HCT116 (cell line): ENCODE measurements at regions of chr2 and their contacts with region 1.

Region 1: DNA sequence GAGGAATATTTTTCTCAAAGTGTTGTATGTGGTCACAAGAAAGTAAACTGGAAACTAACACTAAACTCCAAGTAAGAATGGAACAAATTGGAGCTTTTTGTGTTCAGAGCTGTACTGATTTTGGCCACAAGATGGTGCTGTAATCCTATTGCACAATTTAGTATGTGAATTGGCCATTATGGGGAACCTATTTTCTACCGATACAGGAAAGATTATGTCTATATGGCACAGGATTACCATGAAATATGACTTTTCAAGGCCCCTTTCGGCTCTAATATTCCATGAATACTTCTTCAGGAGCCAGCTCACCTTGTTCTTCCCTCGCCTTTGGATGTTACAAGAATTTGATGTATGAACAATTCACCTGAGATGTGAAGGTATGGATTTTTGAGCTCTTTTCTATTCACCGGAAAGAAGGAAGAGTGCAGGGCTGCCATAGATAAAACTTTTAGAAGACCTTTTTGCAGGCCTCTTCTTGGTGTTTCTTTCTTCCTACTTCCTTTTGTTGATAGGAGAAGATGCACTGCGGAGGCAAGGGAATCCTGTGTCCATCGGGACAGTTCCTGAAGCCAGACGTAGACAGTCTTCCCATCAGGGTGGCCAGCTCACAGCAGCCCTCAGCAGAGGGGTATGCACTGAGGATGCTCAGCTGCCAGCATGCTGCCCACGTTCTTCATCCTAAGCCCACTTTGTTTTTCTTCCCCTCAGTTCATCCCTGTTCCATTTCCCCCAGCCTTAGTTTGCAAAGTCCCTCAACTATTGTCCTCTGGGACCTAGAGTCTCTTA is 13.3 kb downstream of the MRPL44 start:
- DNase-seq: peak; percentile 49
- ATAC-seq: peak; percentile 77
- H3K4me3 ChIP-seq: no peak overlapping the region
- H3K27ac ChIP-seq: no peak overlapping the region
- H3K4me1 ChIP-seq: no peaks in the 10 kb centered on the region
- H3K27me3 ChIP-seq: no peaks in the 10 kb centered on the region
- CTCF ChIP-seq: peak; percentile 84 to 96 (median 93)
- POLR2A ChIP-seq: no peak
- RAD21 ChIP-seq: peak; percentile 95

Region 2: GRCh38 chr2:223959688-223960087 is 10.8 kb before region 1 on chr2:
- CTCF ChIA-PET with region 1: interaction called, 10 read pairs
- POLR2A ChIA-PET with region 1: no interaction called
- RAD21 ChIA-PET with region 1: no interaction called
- intact Hi-C with region 1: no loop called
- DNase-seq: no peak
- ATAC-seq: no peak
- H3K4me3 ChIP-seq: no peak overlapping the region
- H3K27ac ChIP-seq: no peak overlapping the region
- H3K4me1 ChIP-seq: peaks cover 15 to 21% of the 10 kb centered on the region in 2 experiments
- H3K27me3 ChIP-seq: no peaks in the 10 kb centered on the region
- CTCF ChIP-seq: no peak
- POLR2A ChIP-seq: no peak
- RAD21 ChIP-seq: no peak

Region 3: DNA sequence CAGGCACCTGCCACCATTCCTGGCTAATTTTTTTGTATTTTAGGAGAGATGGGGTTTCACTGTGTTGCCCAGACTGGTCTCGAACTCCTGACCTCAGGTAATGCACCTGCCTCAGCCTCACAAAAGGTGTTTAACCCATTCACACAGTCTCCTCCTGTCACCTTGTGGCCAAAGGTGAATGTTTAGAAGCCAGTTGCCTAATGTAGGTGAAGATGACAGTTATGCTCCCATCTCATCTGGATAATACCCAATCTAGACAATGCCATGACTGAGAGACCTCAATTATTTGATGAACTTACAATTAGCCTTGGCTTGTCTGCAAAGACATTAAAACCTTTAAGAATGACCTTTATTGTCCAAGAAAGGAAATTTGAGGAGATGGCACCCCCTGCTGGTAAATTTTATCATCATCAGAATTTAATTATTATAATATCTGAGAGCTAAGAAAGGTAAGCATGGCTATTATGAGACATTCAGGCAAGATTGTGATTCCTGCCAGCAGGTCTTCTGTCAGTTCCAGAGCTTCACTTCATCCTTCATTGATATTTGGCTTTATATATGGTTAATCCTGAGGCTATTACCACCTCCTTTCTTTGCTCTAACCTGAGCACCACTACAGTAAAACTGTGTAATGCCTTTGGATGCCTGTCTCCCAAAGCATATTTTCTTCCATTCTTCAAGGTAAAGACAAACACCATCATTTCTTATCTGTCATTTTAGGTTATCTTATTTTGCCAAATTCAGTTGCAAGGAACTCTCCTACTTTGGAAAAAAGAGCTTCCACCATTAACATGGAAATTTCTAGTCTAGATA is 313.8 kb after region 1 on chr2:
- CTCF ChIA-PET with region 1: interaction called, 170 read pairs
- POLR2A ChIA-PET with region 1: interaction called, 7 read pairs
- RAD21 ChIA-PET with region 1: interaction called, 15 to 31 read pairs
- intact Hi-C with region 1: loop called (anchors 1 kb)
- DNase-seq: peak; percentile 61
- ATAC-seq: peak; percentile 83
- H3K4me3 ChIP-seq: no peak overlapping the region
- H3K27ac ChIP-seq: no peak overlapping the region
- H3K4me1 ChIP-seq: no peaks in the 10 kb centered on the region
- H3K27me3 ChIP-seq: no peaks in the 10 kb centered on the region
- CTCF ChIP-seq: peak; percentile 55 to 99 (median 87)
- POLR2A ChIP-seq: no peak
- RAD21 ChIP-seq: peak; percentile 98

Region 4: DNA sequence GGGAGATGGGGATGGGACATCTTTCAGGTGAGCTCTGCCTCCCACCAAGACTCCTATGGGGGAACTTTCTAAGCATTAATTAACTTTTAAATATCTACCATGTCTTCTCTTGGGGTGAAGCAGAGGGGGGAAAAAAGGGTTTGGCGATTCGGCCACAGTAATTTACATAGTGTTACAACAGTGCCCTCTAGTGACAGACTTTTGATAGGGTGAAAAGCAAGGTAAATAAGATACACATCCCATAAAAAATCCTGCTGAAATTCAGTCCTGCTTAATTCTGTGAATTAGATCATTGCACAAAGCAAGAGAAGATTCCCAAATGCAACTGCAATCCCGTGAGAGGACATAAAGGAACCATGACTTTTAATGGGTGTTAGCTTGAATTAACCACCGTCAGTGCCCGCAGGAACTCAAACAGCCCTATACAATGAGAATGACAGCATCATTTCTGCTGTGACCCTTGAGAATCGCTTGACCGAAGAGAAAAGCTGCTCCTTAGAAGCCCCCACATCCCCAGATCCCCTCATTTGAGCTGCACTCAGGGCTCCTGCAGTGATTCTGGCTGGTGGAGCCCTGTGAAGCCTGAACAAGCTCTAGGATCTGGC is 398.6 kb after region 1 on chr2:
- CTCF ChIA-PET with region 1: interaction called, 12 read pairs
- POLR2A ChIA-PET with region 1: no interaction called
- RAD21 ChIA-PET with region 1: interaction called, 4 read pairs
- intact Hi-C with region 1: no loop called
- DNase-seq: peak; percentile 37
- ATAC-seq: peak; percentile 71
- H3K4me3 ChIP-seq: no peak overlapping the region
- H3K27ac ChIP-seq: no peak overlapping the region
- H3K4me1 ChIP-seq: no peaks in the 10 kb centered on the region
- H3K27me3 ChIP-seq: no peaks in the 10 kb centered on the region
- CTCF ChIP-seq: peak; percentile 53 to 83 (median 58); a peak in 5 of 6 replicates
- POLR2A ChIP-seq: no peak
- RAD21 ChIP-seq: peak; percentile 78

Region 5: DNA sequence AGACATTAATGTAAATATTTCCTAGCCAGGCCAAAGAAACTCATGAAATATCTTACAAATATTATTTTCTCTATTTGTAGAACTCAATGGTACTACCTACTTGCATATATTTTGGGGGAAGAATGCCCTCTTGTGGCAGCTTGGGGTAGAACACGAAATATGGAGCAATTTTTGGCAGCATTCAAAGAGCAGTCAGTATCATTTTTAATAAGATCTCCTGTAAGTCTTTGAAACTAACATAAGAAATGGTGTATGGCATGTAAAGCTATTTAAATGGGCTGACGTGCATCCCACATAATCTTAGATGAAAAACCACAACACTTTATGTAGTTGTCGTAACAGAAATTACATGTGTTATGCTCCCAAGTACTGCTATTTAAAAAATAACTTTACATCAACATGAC is 807.9 kb after region 1 on chr2:
- CTCF ChIA-PET with region 1: interaction called, 3 read pairs
- POLR2A ChIA-PET with region 1: no interaction called
- RAD21 ChIA-PET with region 1: no interaction called
- intact Hi-C with region 1: loop called (anchors 10 kb)
- DNase-seq: peak; percentile 46
- ATAC-seq: peak; percentile 67
- H3K4me3 ChIP-seq: no peak overlapping the region
- H3K27ac ChIP-seq: no peak overlapping the region
- H3K4me1 ChIP-seq: peaks cover 0 to 11% of the 10 kb centered on the region in 2 experiments; a peak in 1 of 4 replicates
- H3K27me3 ChIP-seq: no peaks in the 10 kb centered on the region
- CTCF ChIP-seq: peak; percentile 65 to 82 (median 79); a peak in 5 of 6 replicates
- POLR2A ChIP-seq: no peak
- RAD21 ChIP-seq: peak; percentile 87